OCI-LY7 (cell line): ENCODE measurements at regions of chr17 and their contacts with region 1.

Region 1: GRCh38 chr17:79741751-79742588 is 11.2 kb downstream of the ENPP7 start:
- DNase-seq: peak; percentile 71
- H3K4me3 ChIP-seq: no peak overlapping the region
- H3K27ac ChIP-seq: no peak overlapping the region
- H3K4me1 ChIP-seq: peaks cover 7% of the 10 kb centered on the region
- CTCF ChIP-seq: peak; percentile 98

Region 2: DNA sequence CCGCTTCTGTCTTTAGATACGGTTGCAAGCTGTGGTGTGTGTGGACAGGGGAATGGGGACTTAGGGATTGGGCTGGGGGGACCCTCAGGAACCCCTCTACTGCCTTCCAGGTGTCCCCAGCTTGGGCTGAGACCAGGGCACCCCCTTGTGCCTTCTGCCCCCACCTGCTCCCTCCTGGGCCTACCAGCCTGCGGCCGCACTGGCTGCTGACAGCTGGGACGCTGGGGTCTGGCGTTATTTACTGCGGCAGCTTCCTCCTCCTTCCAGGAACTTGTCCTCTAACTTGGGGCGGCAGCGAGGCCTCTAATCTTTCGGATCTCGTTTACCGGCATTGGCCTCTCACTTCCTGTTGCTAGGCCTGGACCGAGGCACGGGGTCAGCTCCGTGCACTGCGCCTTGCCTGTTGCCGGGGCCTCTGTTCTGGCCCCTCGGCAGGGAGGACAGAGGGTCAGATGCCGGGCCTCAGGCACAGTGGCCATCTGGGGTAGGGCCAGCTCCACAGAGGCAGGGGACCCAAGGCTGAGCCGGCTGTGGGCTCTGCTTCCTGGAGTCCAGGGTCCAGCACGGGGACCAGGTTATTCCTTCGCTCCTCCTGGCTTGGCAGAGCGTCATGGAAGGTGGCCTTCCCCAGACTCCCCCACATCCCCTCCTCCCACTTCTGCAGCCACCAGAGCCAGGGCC is 1478.8 kb before region 1 on chr17:
- CTCF ChIA-PET with region 1: no interaction called
- POLR2A ChIA-PET with region 1: no interaction called
- intact Hi-C with region 1: loop called (anchors 10 kb)
- DNase-seq: no peak
- H3K4me3 ChIP-seq: no peak overlapping the region
- H3K27ac ChIP-seq: no peak overlapping the region
- H3K4me1 ChIP-seq: peaks cover 18% of the 10 kb centered on the region
- CTCF ChIP-seq: no peak

Region 3: DNA sequence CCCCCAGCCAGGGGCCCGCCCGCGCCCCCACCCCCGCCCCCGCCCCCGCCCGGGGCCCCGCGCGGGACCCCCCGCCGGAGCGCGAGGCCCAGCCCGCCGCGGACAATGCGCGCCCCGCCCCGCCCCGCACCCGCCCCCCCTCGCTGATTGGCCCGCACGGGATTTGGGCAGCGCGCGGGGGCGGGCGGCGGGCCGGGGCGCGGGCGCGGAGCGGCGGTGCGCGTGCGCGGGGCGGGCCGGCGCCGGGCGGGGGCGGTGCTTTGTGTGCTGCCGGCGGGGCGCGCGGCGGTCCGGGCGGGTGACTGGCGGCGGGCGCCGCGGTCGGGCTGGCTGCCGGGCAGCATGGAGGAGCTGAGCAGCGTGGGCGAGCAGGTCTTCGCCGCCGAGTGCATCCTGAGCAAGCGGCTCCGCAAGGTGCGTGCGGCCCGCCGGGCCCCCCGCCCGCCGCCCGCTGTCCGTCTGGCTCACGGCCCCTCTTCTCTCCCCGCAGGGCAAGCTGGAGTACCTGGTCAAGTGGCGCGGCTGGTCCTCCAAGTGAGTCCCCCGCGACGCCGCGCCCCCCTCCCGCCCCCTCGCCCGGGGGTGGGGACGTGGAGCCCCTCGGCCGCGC is 36.0 kb after region 1 on chr17 and contains the start of gene CBX2:
- CTCF ChIA-PET with region 1: no interaction called
- POLR2A ChIA-PET with region 1: no interaction called
- intact Hi-C with region 1: loop called (anchors 5 kb)
- DNase-seq: peak; percentile 88
- H3K4me3 ChIP-seq: peak within 1 kb of the TSS; percentile 95
- H3K27ac ChIP-seq: peak within 1 kb of the TSS; percentile 28
- H3K4me1 ChIP-seq: peaks cover 37% of the 10 kb centered on the region
- CTCF ChIP-seq: no peak
- total RNA-seq, gene CBX2: 29.9 and 31.5 TPM in 2 replicates

Region 4: GRCh38 chr17:79970576-79971068 is 228.7 kb after region 1 on chr17:
- CTCF ChIA-PET with region 1: interaction called, 3 read pairs
- POLR2A ChIA-PET with region 1: no interaction called
- intact Hi-C with region 1: loop called (anchors 2 kb)
- DNase-seq: peak; percentile 82
- H3K4me3 ChIP-seq: no peak overlapping the region
- H3K27ac ChIP-seq: no peak overlapping the region
- H3K4me1 ChIP-seq: peaks cover 7% of the 10 kb centered on the region
- CTCF ChIP-seq: peak; percentile 96